HCT116 (cell line): ENCODE measurements at regions of chr17 and their contacts with region 1.

Region 1: GRCh38 chr17:7687908-7688807 is at the start of gene WRAP53:
- DNase-seq: peak; percentile 99
- ATAC-seq: peak; percentile 91
- H3K4me3 ChIP-seq: peak within 1 kb of the TSS; percentile 86 to 100
- H3K27ac ChIP-seq: peak within 1 kb of the TSS; percentile 89
- H3K4me1 ChIP-seq: peaks cover 26 to 33% of the 10 kb centered on the region in 2 experiments
- H3K27me3 ChIP-seq: no peaks in the 10 kb centered on the region
- CTCF ChIP-seq: peak; percentile 93 to 99 (median 99)
- POLR2A ChIP-seq: peak; percentile 73
- RAD21 ChIP-seq: peak; percentile 87
- total RNA-seq, gene WRAP53: 28.8 TPM

Region 2: DNA sequence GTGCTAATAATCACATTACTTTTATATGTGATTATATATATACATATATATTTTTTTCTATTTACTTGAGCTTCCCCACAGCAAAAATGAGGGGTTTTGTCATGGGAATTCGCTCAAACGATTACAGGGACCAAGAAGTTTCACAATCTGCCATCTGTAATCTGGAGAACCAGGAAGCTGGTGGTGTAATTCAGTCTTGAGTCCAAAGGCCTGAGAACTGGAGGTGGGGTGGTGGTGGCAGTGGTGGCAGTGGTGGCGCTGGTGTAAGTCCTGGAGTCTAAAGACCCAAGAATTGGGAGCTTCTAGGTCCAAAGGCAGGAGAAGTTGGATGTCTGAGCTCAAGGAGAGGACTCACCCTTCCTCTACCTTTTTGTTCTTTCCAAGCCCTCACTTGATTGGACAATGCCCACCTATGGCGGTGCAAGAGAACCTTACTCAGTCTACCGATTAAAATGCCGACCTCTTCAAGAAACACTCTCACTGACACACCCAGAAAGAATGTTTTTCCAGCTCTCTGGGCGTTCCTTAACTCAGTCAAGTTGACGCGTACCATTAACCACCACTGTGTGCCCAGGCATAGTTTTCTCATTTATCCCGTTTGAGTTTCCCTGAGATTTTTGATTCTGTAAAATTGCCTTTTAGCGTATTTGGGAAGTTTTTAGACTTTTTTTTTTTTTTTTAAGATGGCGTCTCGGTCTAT is 172.1 kb before region 1 on chr17:
- CTCF ChIA-PET with region 1: interaction called, 8 read pairs
- POLR2A ChIA-PET with region 1: no interaction called
- RAD21 ChIA-PET with region 1: no interaction called
- intact Hi-C with region 1: loop called (anchors 5 kb)
- DNase-seq: no peak
- ATAC-seq: no peak
- H3K4me3 ChIP-seq: no peak overlapping the region
- H3K27ac ChIP-seq: no peak overlapping the region
- H3K4me1 ChIP-seq: no peaks in the 10 kb centered on the region
- H3K27me3 ChIP-seq: no peaks in the 10 kb centered on the region
- CTCF ChIP-seq: no peak
- POLR2A ChIP-seq: no peak
- RAD21 ChIP-seq: no peak

Region 3: DNA sequence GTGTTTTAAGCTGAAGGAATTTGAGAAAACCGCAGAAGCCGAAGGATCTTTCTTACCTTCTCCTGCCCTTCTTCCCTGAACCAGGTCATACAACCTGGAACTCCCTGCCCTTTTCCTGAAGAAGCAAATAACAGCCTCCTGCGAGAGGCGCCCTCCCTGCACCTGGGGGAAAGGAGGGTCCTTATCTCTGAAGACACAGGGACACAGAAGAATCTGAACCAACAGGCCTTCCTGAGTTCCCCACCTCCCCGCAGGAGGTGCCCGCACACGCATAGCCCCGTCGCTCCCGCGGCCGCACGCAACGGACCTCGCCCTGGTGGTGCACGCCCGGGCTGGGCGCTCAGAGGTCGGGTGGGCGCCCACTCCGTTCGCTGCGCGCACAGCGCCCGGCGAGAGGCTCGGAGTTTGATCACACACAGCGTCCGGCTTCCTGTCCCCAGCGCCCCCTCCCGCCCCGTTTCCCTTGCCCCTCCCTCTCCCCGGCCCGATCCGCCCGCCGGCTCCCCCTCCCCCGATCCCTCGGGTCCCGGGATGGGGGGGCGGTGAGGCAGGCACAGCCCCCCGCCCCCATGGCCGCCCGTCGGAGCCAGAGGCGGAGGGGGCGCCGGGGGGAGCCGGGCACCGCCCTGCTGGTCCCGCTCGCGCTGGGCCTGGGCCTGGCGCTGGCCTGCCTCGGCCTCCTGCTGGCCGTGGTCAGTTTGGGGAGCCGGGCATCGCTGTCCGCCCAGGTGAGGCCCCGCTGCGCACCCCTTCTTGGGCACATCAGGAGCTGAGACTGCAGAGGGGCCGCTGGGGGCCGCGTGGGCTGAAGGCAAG is 139.4 kb before region 1 on chr17 and contains the start of gene TNFSF12:
- CTCF ChIA-PET with region 1: no interaction called
- POLR2A ChIA-PET with region 1: no interaction called
- RAD21 ChIA-PET with region 1: no interaction called
- intact Hi-C with region 1: no loop called
- DNase-seq: no peak
- ATAC-seq: peak; percentile 81
- H3K4me3 ChIP-seq: peak within 1 kb of the TSS; percentile 63 to 70
- H3K27ac ChIP-seq: peak within 1 kb of the TSS; percentile 59
- H3K4me1 ChIP-seq: peaks cover 6 to 16% of the 10 kb centered on the region in 2 experiments
- H3K27me3 ChIP-seq: no peaks in the 10 kb centered on the region
- CTCF ChIP-seq: peak in 1 of 3 experiments; percentile 9; a peak in 1 of 6 replicates
- POLR2A ChIP-seq: no peak
- RAD21 ChIP-seq: 0 out of 2 replicates have a peak, but pooled peaks have one; percentile 7
- total RNA-seq, gene TNFSF12: 12.3 TPM

Region 4: DNA sequence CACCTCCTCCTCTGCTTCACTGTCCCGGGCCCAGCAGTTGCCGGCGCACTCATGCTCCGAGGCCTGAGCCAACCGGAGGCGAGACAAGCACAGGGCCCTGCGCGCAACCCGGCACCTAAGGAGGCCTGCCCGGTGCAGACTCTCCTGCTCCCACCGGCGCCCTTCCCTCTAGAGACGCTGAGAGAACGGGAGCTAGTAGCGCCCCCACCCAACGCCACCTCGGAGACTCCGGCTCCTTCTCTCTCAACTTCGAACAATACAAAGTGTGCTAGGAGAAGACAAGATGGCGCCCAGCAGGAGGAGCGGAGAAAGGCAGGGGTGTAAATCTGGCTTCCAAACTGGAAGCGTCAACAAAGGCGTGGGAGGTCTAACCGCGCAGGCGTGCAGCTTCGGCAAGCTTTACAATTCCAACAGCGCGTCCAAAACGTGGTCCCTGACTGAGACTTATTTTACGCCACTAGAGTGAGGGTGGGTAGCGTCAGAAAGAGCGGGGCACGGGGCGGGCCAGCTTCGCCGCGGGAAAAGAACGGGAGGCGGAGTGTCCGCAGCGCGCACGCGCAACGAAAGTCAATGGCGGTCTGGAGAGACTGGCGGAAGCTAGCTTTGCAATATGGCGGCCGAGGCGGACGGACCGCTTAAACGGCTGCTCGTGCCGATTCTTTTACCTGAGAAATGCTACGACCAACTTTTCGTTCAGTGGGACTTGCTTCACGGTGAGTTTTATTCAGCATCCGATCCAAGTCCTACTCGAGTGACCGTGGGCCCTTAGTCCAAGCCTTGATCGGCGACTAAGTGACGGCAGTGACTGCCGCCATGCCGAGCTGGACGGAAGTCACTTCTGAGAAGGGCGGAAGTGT is 104.7 kb before region 1 on chr17 and contains the start of gene MPDU1:
- CTCF ChIA-PET with region 1: interaction called, 39 read pairs
- POLR2A ChIA-PET with region 1: interaction called, 37 read pairs
- RAD21 ChIA-PET with region 1: interaction called, 3 to 6 read pairs
- intact Hi-C with region 1: loop called (anchors 1 kb)
- DNase-seq: peak; percentile 90
- ATAC-seq: peak; percentile 67
- H3K4me3 ChIP-seq: peak within 1 kb of the TSS; percentile 60 to 97
- H3K27ac ChIP-seq: peak within 1 kb of the TSS; percentile 90
- H3K4me1 ChIP-seq: peaks cover 14 to 53% of the 10 kb centered on the region in 2 experiments
- H3K27me3 ChIP-seq: no peaks in the 10 kb centered on the region
- CTCF ChIP-seq: no peak
- POLR2A ChIP-seq: peak; percentile 59
- RAD21 ChIP-seq: no peak
- total RNA-seq, gene MPDU1: 50.9 TPM

Region 5: DNA sequence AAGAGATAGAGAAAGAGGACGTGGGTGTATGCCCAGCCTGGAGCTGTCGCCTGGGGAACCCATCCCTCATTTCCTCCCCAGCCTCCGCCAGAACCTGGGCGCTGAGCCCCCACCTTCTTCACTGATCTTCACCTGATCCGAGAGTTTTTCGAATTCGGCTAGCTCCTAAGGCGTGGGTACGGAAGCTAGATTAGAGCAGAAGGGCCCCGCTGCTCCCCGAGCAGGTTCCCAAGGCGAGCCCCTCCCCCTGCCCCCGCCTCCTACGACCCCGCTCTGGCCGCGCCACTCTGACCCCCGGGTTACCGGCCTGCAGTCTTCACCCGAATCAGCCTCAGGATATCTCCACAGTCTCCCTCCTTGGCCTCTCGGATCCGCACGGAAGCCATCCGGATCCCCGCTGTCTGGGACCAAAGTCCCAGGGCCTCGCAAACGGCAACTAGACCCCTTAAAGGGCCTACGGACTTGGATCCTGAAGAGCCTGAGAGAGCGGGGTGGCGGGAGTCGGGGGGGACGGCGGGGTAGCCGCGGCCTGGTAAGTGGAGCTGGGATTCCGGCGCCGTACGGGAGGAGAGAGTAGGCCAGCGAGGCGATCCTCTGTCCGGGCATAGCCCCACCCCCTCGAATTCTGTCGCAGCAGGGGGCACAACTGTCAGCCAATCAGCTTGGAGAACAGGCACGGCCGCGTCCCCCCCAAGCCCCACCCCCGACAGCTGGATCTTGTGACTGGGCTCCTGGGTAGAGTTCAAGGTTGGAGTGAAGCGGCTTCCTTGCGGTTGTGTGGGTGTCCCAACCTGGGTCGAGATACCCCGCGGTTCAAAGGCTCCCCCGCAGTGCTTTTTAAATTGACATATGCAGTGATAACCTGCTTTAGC is 60.7 kb before region 1 on chr17 and contains the start of gene SAT2:
- CTCF ChIA-PET with region 1: interaction called, 54 read pairs
- POLR2A ChIA-PET with region 1: interaction called, 31 read pairs
- RAD21 ChIA-PET with region 1: interaction called, 3 to 5 read pairs
- intact Hi-C with region 1: loop called (anchors 1 kb)
- DNase-seq: peak; percentile 84
- ATAC-seq: peak; percentile 90
- H3K4me3 ChIP-seq: peak within 1 kb of the TSS; percentile 85
- H3K27ac ChIP-seq: peak within 1 kb of the TSS; percentile 66
- H3K4me1 ChIP-seq: peaks cover 4 to 17% of the 10 kb centered on the region in 2 experiments
- H3K27me3 ChIP-seq: no peaks in the 10 kb centered on the region
- CTCF ChIP-seq: no peak
- POLR2A ChIP-seq: peak; percentile 34
- RAD21 ChIP-seq: no peak
- total RNA-seq, gene SAT2: 54.9 TPM

Region 6: DNA sequence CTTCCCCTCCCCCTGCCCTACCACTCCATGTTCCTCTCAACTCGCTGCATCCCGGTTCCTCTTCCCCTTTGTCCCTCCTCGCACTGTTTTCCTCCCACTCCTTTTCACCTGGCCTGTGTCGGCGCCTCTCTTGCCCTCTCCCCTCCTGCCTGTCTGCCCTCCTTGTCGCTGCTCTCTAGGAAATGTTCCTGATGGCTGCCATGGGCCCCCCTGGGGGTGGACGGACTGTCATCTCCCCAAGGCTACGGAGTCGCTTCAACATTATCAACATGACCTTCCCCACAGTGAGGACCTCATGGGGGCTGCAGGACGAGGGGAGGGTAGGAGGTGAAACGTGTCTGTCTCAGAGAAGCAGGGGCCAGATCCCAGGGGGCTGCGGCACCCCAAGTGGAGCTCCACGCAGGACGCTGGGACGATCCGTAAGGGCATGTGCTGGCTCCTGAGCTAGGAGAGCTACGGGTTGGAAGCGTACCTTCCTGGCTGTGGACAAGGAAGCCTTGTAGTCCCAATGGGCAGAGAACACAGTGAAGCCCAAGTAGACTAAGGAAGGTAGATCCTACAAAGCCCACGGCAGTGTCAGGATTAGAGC is 106.0 kb after region 1 on chr17:
- CTCF ChIA-PET with region 1: no interaction called
- POLR2A ChIA-PET with region 1: no interaction called
- RAD21 ChIA-PET with region 1: no interaction called
- intact Hi-C with region 1: no loop called
- DNase-seq: no peak
- ATAC-seq: no peak
- H3K4me3 ChIP-seq: no peak overlapping the region
- H3K27ac ChIP-seq: no peak overlapping the region
- H3K4me1 ChIP-seq: no peaks in the 10 kb centered on the region
- H3K27me3 ChIP-seq: no peaks in the 10 kb centered on the region
- CTCF ChIP-seq: no peak
- POLR2A ChIP-seq: no peak
- RAD21 ChIP-seq: no peak

Region 7: GRCh38 chr17:7867881-7868329 is 179.7 kb after region 1 on chr17:
- CTCF ChIA-PET with region 1: no interaction called
- POLR2A ChIA-PET with region 1: no interaction called
- RAD21 ChIA-PET with region 1: no interaction called
- intact Hi-C with region 1: no loop called
- DNase-seq: no peak
- ATAC-seq: no peak
- H3K4me3 ChIP-seq: no peak overlapping the region
- H3K27ac ChIP-seq: no peak overlapping the region
- H3K4me1 ChIP-seq: peaks cover 3 to 14% of the 10 kb centered on the region in 2 experiments; a peak in 3 of 4 replicates
- H3K27me3 ChIP-seq: no peaks in the 10 kb centered on the region
- CTCF ChIP-seq: no peak
- POLR2A ChIP-seq: no peak
- RAD21 ChIP-seq: no peak

Region 8: DNA sequence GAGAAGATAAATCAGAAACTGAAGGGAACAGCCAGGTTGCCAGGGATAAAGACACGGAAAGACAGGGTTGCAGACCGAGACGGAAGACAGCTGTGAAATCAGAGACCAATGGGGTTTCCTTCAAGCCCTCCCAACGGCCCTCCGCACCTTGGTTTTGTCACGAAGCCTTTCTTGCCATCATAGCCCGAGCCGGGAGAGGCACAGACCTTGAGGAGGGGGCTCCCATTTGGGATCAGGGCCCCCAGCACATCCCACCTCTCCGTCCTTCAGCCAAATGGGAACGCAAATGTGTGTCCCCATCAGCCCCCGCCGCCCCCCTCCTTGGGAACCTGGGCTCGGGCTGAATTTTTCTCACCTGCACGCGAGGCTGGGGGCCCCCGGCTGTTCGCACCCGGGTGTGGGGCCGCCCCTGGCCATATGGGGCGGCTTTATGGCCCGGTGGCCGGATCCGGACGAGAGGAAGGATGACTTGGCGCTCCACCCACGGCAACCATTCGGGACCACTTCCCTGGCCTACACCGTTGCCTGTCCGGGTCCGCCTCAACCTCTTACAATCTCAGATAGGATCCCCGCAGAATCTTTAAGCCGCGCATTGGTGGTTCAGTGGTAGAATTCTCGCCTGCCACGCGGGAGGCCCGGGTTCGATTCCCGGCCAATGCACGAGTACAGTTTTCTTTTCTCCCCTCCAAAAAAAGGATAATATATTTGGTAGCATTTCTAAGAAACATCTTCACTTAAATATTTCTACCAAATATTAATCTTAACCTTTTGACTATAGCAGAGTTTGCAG is 437.2 kb after region 1 on chr17:
- CTCF ChIA-PET with region 1: no interaction called
- POLR2A ChIA-PET with region 1: no interaction called
- RAD21 ChIA-PET with region 1: no interaction called
- intact Hi-C with region 1: loop called (anchors 5 kb)
- DNase-seq: peak; percentile 60
- ATAC-seq: peak; percentile 18
- H3K4me3 ChIP-seq: peak overlapping the region; percentile 44 to 57
- H3K27ac ChIP-seq: peak overlapping the region; percentile 57; the same call in 1 of the 2 replicates
- H3K4me1 ChIP-seq: peaks cover 26 to 72% of the 10 kb centered on the region in 2 experiments
- H3K27me3 ChIP-seq: no peaks in the 10 kb centered on the region
- CTCF ChIP-seq: no peak
- POLR2A ChIP-seq: no peak
- RAD21 ChIP-seq: no peak